ENCODE measurements at regions of chr7 and their contacts with region 1.

Region 1: DNA sequence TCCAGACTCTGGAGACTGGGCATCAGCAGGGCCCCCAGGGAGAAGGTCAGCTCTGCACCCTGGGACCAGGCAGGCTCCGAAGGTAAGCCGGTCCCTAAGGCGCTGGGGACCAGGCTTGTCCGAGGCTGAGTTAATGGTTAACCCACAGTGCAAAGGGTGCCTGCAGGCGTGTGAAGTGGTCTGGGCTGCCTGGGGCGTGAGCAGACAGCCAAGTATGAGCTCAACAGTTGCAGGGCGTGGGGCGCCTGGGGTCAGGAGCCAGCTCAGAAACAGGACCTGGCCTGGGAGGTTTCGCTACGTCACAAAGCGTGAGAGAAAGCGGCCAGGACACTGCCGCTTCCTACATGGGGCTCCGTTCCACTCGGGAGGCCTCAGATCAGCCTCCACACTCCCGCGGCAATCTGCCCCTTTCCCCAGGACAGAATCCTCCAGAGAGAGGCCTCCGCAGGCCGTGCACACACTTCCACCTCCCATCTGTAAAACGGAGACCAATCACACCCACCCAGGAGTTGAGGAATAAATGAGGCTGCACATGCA is 16.0 kb downstream of the PDGFA start:
- DNase-seq: peak; percentile 53
- ATAC-seq: peak; percentile 68

Region 2: DNA sequence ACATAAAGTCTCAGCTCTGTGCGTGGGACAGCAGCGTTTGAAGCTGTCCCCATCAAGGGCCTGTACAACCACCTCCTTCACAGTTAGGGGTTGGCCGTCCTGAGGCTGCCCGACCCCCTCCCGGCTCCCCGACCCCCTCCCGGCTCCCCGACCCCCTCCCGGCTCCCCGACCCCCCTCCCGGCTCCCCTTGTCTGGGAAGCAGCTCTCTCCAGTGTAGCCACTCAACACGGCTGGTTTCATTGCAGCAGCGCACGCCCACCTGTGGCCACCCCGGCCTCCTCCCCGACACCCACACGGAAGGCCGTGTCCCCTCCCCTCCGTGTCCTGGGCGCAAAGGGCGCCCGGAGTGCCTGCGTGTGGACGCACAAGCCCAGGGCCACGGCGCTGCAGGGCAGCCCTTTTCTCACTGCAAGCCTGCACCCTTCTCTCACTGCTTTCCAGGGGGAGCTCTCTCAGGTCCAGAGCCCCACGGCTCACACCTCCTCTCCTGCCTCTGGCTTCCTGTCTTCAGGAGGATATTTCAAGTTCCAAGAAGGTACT is 332.2 kb before region 1 on chr7:
- intact Hi-C with region 1: no loop called
- DNase-seq: no peak
- ATAC-seq: no peak

Region 3: GRCh38 chr7:485188-486081 is 18.2 kb before region 1 on chr7:
- intact Hi-C with region 1: no loop called
- DNase-seq: peak; percentile 44
- ATAC-seq: peak; percentile 20

Region 4: DNA sequence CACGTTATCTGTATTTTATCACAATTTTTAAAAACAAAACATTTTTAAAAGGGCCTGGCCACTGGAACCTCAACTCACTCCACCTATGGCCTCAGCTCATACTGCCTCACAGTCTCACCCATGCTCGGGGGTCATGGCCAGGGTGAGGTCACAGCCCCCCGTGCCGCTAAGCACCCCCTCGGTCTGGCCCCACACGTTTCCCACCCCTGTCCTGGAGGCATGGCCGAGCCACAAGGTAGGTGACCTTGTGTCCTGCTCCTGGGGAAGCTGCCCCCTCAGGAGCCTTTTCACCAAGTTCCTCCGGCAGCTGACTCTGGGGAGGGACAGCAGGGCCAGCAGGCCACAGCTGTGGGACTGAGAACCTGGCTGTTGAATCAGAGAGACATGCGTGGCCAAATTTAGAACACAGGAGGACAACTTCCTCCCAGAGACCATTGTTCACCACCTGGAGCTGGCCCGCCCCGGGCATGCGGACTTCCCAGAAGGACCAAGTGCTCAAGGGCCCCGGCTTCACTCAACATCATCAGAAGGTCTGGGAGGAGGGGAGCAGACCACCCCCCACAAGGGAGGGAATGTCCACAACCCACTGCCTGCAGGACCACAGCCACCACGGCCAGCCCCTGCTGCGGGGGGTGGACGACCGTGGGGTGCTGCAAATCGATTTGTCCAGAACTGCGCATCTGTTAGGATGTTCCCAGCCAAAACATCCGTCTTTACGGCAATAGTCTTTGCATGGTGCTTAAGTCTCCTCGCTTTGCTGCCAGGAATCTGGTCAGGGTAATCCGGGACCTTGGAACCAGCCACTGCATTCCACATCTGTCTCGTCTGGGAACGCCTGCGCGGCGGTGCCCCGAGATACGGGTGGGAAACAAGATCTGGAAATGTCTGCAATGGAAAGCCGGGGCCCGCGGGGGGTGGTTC is 64.6 kb after region 1 on chr7:
- intact Hi-C with region 1: no loop called
- DNase-seq: no peak
- ATAC-seq: peak; percentile 21

Region 5: DNA sequence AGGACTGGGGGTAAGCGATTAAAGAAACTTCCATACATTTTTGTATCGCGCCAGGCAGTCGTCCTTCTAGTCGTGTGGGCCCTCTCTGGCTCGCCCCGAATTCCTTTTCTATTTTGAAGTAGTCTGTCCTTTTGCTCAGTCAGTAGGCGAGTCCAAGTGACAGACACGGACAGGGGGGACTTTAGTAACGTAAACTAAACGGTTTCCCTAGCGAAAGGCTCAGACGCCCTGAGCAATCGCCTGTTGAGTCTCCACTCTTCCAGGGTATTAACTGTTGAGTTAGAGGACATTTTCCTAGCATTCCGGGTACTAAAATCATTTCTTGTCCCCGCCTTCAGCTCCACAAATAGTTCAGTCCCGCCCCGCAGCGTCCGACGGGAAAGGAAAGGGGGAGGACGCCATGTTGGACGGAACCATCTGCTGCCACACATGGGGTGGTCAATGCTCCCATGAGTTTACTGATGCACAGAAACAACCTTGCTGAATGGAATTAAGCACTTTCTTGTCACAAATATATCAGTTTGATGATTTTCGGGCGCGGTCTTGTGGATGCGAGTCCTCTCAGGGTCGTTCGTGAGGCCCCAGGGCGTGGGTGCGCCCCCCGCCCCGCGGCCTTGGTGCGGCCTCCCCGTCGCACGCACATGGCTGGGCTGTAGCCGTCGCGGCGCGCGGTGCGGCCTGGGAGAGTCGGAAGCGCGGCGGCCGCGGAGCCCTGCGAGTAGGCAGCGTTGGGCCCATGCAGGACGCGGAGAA is 1850.7 kb after region 1 on chr7 and contains the start of gene EIF3B:
- intact Hi-C with region 1: loop called (anchors 10 kb)
- DNase-seq: peak; percentile 94
- ATAC-seq: peak; percentile 96
- total RNA-seq, gene EIF3B: 93.6 TPM

Measured in sciatic nerve (tissue), 2 donors.